Activated T-helper 1 cell treated with anti-CD3 and anti-CD28 coated beads, Interleukin-12 subunit alpha, Interleukin-12 subunit beta, Interleukin-2, Interleukin-4 antibody, amounts not matched to agents 30 ng/mL and 10 ng/mL and 1 ng/mL, durations not matched to agents 14 hours and 24 hours and 36 hours (primary cell): ENCODE measurements at regions of chr16 and their contacts with region 1.

Region 1: DNA sequence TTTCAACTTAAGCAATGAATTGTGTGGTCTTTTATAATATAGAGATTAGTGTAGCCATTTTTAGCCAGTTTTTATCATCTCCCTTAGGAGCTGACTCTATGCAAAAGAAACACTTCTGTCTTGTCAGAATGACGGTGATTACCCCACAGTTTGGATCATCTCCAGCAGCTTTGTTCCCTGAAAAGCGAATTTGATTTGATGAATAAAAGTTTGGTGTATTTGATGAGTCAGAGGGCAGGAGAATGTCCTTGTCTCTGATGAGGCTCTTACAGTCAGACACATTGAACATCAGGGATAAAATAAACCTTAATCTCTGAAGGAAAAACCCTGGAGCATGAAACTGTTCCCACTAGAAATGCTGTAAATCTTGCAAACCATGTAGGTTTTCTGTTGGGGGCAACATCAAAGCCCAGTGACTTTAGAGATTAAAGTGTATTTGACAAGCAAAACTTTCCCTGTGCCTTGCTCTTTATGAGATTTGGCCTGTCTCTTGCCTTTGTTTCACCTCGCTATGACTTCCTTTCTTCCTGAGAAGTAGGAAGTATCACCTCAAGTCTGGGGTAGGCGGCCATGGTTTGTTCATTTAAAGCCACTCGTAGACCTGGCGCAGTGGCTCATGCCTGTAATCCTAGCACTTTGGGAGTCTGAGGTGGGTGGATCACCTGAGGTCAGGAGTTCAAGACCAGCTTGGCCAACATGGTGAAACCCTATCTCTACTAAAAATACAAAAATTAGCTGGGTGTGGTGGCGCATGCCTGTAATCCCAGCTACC is 209.3 kb downstream of the FTO start:
- DNase-seq: peak; percentile 4
- H3K4me3 Mint-ChIP-seq: peak overlapping the region; percentile 46
- H3K27ac Mint-ChIP-seq: peak overlapping the region; percentile 82
- H3K4me1 Mint-ChIP-seq: peaks cover 8% of the 10 kb centered on the region
- H3K27me3 Mint-ChIP-seq: no peaks in the 10 kb centered on the region

Region 2: GRCh38 chr16:53457670-53458069 is 455.6 kb before region 1 on chr16:
- intact Hi-C with region 1: loop called (anchors 5 kb)
- DNase-seq: peak; percentile 80
- H3K4me3 Mint-ChIP-seq: peak overlapping the region; percentile 73
- H3K27ac Mint-ChIP-seq: peak overlapping the region; percentile 94
- H3K4me1 Mint-ChIP-seq: peaks cover 88% of the 10 kb centered on the region
- H3K27me3 Mint-ChIP-seq: no peaks in the 10 kb centered on the region

Region 3: GRCh38 chr16:53530046-53530445 is 383.2 kb before region 1 on chr16:
- intact Hi-C with region 1: loop called (anchors 10 kb)
- DNase-seq: no peak
- H3K4me3 Mint-ChIP-seq: no peak overlapping the region
- H3K27ac Mint-ChIP-seq: no peak overlapping the region
- H3K4me1 Mint-ChIP-seq: peaks cover 18% of the 10 kb centered on the region
- H3K27me3 Mint-ChIP-seq: no peaks in the 10 kb centered on the region

Region 4: GRCh38 chr16:53865494-53865863 is 47.8 kb before region 1 on chr16:
- intact Hi-C with region 1: loop called (anchors 1 kb)
- DNase-seq: no peak
- H3K4me3 Mint-ChIP-seq: no peak overlapping the region
- H3K27ac Mint-ChIP-seq: peak overlapping the region; percentile 69
- H3K4me1 Mint-ChIP-seq: peaks cover 32% of the 10 kb centered on the region
- H3K27me3 Mint-ChIP-seq: no peaks in the 10 kb centered on the region

Region 5: DNA sequence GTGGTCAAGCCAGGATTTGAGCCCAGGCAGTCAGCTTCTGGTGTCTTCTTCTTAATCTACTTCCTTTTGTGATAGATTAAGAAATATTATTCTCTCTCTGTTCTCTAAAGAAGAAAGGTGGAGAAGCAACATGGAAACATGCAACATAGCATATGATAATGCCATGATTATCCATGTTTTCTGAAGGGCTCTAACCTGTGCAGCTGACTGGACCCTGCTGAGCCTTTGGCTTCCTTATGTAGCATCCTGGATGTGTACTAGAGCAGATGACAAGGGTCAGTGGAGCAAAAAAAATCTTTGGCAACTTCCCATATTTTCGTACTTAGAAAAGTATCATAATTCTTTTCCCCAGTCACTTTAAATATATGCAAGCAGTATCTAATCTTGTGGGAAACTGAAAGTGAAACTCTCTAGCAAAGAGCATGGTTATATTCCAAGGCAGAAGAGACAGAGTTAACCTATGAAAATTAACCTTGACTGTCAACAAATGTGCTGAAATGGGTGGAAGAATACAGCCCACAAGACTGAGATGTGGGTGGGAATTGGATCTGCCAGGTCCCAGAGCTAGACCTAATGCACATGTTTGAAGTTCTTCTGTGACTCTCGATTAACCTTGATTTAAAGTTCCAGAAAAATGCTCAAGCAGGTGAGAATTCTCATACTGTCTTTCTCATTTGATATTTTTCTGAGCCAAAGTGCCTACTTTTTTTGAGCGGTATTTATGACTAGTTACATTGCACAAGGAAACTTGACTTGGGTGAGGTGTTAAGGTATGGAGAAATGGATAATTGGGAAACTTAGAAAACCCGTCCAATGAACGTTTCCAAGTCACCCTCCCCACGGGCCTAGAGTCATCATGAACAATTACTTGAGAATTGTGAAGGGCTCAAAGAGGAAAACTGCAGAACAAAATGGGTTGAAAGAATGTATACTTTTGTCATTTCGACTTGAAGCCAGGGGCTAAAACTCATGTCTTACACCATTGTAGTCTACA is 39.2 kb after region 1 on chr16:
- intact Hi-C with region 1: loop called (anchors 2 kb)
- DNase-seq: no peak
- H3K4me3 Mint-ChIP-seq: peak overlapping the region; percentile 68
- H3K27ac Mint-ChIP-seq: peak overlapping the region; percentile 58
- H3K4me1 Mint-ChIP-seq: peaks cover 63% of the 10 kb centered on the region
- H3K27me3 Mint-ChIP-seq: no peaks in the 10 kb centered on the region